ENCODE measurements at regions of chr2 and their contacts with region 1.

Region 1: DNA sequence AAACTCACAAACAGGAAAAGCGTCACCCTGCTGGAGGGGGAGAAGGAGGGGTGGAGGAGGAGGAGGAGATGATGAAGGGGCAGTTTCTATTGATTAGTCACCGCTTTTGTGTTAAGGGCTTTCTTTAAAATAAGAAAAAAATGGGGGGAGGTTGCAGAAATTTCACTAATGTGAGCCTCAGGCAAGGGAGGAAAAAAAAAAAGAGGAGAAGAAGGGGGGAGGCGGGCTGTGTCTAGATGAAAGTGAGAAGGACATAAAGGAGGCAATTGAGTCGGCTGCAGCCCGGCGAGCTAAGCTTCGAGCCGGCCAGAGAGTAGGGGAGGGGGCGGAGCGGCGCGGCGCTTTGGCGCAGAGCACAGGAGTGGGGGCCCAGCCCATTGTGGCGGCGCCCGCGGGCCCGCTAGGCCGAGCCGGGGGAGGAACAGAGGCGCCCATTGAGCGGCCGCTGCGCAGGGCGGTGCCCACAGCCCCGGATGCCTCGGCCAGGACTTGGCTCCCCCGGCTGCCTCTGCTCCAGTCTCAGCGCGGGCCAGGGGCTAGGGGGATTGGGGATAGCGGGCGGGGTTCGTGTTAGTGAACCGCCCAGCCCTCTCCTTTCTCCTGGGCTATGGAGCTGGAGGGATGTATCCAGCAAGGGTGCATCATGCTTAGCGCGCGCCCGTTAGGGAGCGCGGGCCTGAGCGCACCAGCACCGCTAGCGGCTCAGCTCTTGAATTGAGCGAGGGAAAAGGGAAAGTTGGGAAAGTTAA is 7.9 kb downstream of the PAX3 start:
- DNase-seq: no peak
- ATAC-seq: no peak
- H3K4me3 Mint-ChIP-seq: no peak overlapping the region
- H3K27ac Mint-ChIP-seq: no peak overlapping the region
- H3K4me1 Mint-ChIP-seq: peaks cover 11% of the 10 kb centered on the region
- H3K27me3 Mint-ChIP-seq: peaks cover 79% of the 10 kb centered on the region
- CTCF ChIP-seq: no peak

Region 2: DNA sequence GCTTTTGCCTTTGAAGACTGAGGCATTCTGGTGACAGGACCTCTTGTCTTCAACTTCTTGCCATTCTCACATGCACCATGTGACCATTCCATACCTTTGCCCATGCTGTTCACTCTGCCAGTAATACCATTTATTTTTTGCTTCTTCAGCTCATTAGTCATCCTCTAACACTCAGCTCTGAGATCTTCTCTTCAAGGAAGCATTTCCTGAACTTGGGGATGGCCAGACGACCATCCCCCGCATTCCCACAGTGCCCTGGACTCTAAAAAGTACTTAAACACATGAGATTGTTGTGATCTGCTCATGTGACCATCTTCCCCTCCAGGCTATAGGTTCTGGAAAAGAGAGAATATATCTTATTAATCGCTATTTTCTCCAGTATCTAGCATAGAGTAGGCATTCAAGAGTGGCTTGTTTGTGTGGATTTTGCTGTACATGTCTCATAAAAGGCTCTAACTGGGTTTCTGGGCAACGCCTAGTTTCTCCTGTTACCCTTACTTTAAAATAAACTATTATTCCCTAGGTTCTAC is 26.1 kb before region 1 on chr2:
- CTCF ChIA-PET with region 1: no interaction called
- POLR2A ChIA-PET with region 1: no interaction called
- intact Hi-C with region 1: no loop called
- DNase-seq: no peak
- ATAC-seq: no peak
- H3K4me3 Mint-ChIP-seq: no peak overlapping the region
- H3K27ac Mint-ChIP-seq: no peak overlapping the region
- H3K4me1 Mint-ChIP-seq: no peaks in the 10 kb centered on the region
- H3K27me3 Mint-ChIP-seq: peaks cover 16% of the 10 kb centered on the region
- CTCF ChIP-seq: no peak

Region 3: DNA sequence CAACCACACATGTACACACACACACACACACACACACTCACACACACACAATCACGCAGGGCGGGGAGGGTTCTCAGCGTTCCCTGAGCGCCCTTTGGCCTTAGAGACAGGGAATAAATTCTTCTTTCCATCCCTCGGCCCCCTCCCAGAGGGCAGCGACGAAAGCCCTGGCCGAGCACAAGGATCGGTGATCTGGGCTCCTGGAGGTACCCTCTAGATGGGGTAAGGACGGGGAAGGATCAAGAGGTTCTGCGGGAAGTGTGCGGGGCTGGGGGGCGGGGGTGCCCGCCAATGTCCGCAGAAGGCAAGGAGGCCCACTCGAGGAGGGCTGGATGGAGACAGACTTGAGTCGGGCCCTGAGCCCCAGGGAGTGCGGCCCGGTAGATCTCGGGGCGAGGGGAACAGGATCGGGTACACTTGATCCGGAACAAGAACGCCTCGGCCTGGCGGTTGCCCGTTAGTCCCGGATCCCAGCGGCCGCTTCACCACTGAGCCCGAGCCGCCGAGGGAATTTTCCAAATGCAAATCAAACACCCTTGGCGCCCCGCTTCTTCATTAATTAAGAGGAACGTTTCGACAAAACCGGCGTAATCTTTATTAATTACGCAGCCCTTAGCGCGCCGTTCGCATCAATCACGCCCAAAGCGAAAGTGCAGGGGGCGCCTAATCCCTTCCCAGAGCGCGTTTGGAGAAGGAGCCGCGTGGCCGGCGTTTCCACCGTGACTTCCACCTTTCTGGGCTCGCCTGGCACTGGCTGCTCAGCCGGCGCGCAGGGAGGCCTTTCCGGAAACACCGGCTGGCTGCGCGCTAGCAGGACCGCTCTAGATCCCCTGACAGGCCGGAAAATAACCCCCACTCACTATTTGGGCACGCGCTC is 14.8 kb after region 1 on chr2:
- CTCF ChIA-PET with region 1: no interaction called
- POLR2A ChIA-PET with region 1: no interaction called
- intact Hi-C with region 1: loop called (anchors 2 kb)
- DNase-seq: no peak
- ATAC-seq: peak; percentile 7
- H3K4me3 Mint-ChIP-seq: peak overlapping the region; percentile 76
- H3K27ac Mint-ChIP-seq: no peak overlapping the region
- H3K4me1 Mint-ChIP-seq: peaks cover 33% of the 10 kb centered on the region
- H3K27me3 Mint-ChIP-seq: peaks cover 87% of the 10 kb centered on the region
- CTCF ChIP-seq: no peak

Measured in activated B cell treated with CpG ODN at 0.5 μM for 24 hours (primary cell).